Naive thymus-derived CD4-positive, alpha-beta T cell (primary cell): ENCODE measurements at regions of chr6 and their contacts with region 1.

Region 1: DNA sequence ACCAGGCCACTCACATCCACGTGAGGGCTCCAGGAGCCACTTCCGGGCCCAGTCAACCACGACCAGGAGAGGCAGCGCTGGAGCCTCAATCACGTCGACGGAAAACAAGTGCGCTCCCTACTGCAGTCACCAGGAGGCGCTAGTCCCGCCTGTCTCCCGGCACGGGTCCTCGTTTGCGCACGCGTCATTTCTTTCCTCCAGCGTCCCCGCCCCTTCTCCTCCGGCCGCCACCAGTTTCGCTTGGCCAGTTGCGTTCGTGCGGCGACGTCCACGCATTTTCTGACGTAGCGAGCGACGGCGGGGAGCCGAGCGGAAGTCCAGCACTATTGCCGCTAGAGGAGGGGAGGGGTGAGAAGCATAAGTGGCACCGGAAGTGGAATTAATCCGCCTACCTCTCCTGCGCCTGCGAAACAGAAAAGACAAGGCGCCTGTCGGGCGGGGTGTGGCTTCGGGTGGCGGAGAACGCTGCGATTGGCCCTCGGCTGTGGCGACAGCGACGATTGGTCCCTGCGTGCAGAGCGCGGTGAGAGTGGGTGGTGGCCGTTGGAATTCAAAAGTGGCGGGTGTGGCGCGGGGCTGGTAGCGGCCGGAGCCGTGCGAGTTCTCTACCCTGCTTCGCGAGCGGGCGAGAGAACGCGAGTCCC is at the start of gene KIFC1:
- DNase-seq: peak; percentile 94 to 99 (median 99)
- ATAC-seq: peak; percentile 92
- H3K4me3 ChIP-seq: peak within 1 kb of the TSS; percentile 58
- H3K4me3 Mint-ChIP-seq: peak within 1 kb of the TSS; percentile 82 to 93 (median 85)
- H3K27ac ChIP-seq: peak within 1 kb of the TSS; percentile 81
- H3K27ac Mint-ChIP-seq: peak within 1 kb of the TSS; percentile 94 to 98 (median 97)
- H3K4me1 ChIP-seq: peaks cover 13% of the 10 kb centered on the region in 2 donors
- H3K4me1 Mint-ChIP-seq: peaks cover 11 to 47% (median 22%) of the 10 kb centered on the region in 7 donors
- H3K27me3 ChIP-seq: no peaks in the 10 kb centered on the region
- H3K27me3 Mint-ChIP-seq: peaks cover 0 to 5% (median 0%) of the 10 kb centered on the region in 5 donors
- total RNA-seq, gene KIFC1: 0.65 to 87.9 (median 1.6) TPM

Region 2: GRCh38 chr6:33288921-33289748 is 102.3 kb before region 1 on chr6 and contains the starts of genes PFDN6 and WDR46:
- CTCF ChIA-PET with region 1: interaction called, 4 read pairs
- POLR2A ChIA-PET with region 1: no interaction called
- intact Hi-C with region 1: loop called in 1 of 2 experiments (anchors 1 kb)
- DNase-seq: peak; percentile 55 to 90 (median 87)
- ATAC-seq: peak; percentile 96
- H3K4me3 ChIP-seq: peak within 1 kb of the TSS; percentile 97
- H3K4me3 Mint-ChIP-seq: peak within 1 kb of the TSS; percentile 89 to 99 (median 98)
- H3K27ac ChIP-seq: peak within 1 kb of the TSS; percentile 80
- H3K27ac Mint-ChIP-seq: peak within 1 kb of the TSS; percentile 89 to 98 (median 92)
- H3K4me1 ChIP-seq: peaks cover 19 to 20% of the 10 kb centered on the region in 2 donors
- H3K4me1 Mint-ChIP-seq: peaks cover 32 to 51% (median 45%) of the 10 kb centered on the region in 7 donors
- H3K27me3 ChIP-seq: no peaks in the 10 kb centered on the region
- H3K27me3 Mint-ChIP-seq: no peaks in the 10 kb centered on the region
- total RNA-seq, gene PFDN6: 14.6 to 73.2 (median 35.5) TPM
- total RNA-seq, gene WDR46: 25.3 to 62.7 (median 52.7) TPM

Region 3: GRCh38 chr6:33344701-33345697 is 46.4 kb before region 1 on chr6:
- CTCF ChIA-PET with region 1: interaction called, 8 read pairs
- POLR2A ChIA-PET with region 1: interaction called, 7 read pairs
- intact Hi-C with region 1: loop called (anchors 1 kb)
- DNase-seq: peak; percentile 28 to 87 (median 82)
- ATAC-seq: peak; percentile 60
- H3K4me3 ChIP-seq: peak overlapping the region; percentile 64
- H3K4me3 Mint-ChIP-seq: peak overlapping the region; percentile 68 to 89 (median 86)
- H3K27ac ChIP-seq: peak overlapping the region; percentile 60
- H3K27ac Mint-ChIP-seq: peak overlapping the region; percentile 88 to 99 (median 96)
- H3K4me1 ChIP-seq: peaks cover 23 to 33% of the 10 kb centered on the region in 2 donors
- H3K4me1 Mint-ChIP-seq: peaks cover 22 to 54% (median 41%) of the 10 kb centered on the region in 7 donors
- H3K27me3 ChIP-seq: no peaks in the 10 kb centered on the region
- H3K27me3 Mint-ChIP-seq: peaks cover 0 to 7% (median 0%) of the 10 kb centered on the region in 5 donors

Region 4: GRCh38 chr6:33430991-33431879 is 39.8 kb after region 1 on chr6:
- CTCF ChIA-PET with region 1: interaction called, 7 read pairs
- POLR2A ChIA-PET with region 1: interaction called, 12 read pairs
- intact Hi-C with region 1: loop called (anchors 1 kb)
- DNase-seq: peak; percentile 65 to 89 (median 87)
- ATAC-seq: peak; percentile 82
- H3K4me3 ChIP-seq: peak overlapping the region; percentile 52
- H3K4me3 Mint-ChIP-seq: peak overlapping the region; percentile 86 to 98 (median 92)
- H3K27ac ChIP-seq: peak overlapping the region; percentile 88
- H3K27ac Mint-ChIP-seq: peak overlapping the region; percentile 81 to 98 (median 96)
- H3K4me1 ChIP-seq: peaks cover 42 to 51% of the 10 kb centered on the region in 2 donors
- H3K4me1 Mint-ChIP-seq: peaks cover 56 to 69% (median 64%) of the 10 kb centered on the region in 7 donors
- H3K27me3 ChIP-seq: no peaks in the 10 kb centered on the region
- H3K27me3 Mint-ChIP-seq: no peaks in the 10 kb centered on the region

Region 5: DNA sequence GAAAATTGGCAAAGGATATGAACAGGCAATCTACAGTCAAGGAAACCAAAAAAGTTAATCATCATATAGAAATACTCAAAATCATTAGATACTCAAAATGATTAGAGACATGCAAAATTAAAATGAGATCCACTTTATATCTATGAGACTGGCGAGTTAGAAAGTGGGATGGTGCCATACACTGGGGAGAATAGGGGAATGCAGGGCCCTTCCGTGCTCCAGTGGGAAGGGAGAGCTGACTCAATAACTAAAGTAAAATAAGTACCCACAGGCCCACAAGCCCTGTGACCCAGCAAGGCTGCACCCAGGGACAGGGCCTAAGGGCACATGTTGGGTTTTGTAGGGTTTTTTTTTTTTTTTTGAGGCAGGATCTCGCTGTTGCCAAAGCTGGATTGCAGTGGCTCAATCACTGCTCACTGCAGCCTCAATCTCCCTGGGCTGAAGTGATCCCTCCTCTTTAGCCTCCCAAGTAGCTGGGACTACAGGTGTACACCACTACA is 143.8 kb after region 1 on chr6:
- CTCF ChIA-PET with region 1: no interaction called
- POLR2A ChIA-PET with region 1: no interaction called
- intact Hi-C with region 1: loop called in 1 of 2 experiments (anchors 1 kb)
- DNase-seq: no peak
- ATAC-seq: no peak
- H3K4me3 ChIP-seq: no peak overlapping the region
- H3K4me3 Mint-ChIP-seq: no peak overlapping the region
- H3K27ac ChIP-seq: no peak overlapping the region
- H3K27ac Mint-ChIP-seq: peak overlapping the region in 3 of 9 donors; percentile 9 to 74 (median 50)
- H3K4me1 ChIP-seq: peaks cover 0 to 10% of the 10 kb centered on the region in 2 donors
- H3K4me1 Mint-ChIP-seq: peaks cover 9 to 32% (median 27%) of the 10 kb centered on the region in 7 donors
- H3K27me3 ChIP-seq: no peaks in the 10 kb centered on the region
- H3K27me3 Mint-ChIP-seq: peaks cover 0 to 2% (median 0%) of the 10 kb centered on the region in 5 donors

Region 6: DNA sequence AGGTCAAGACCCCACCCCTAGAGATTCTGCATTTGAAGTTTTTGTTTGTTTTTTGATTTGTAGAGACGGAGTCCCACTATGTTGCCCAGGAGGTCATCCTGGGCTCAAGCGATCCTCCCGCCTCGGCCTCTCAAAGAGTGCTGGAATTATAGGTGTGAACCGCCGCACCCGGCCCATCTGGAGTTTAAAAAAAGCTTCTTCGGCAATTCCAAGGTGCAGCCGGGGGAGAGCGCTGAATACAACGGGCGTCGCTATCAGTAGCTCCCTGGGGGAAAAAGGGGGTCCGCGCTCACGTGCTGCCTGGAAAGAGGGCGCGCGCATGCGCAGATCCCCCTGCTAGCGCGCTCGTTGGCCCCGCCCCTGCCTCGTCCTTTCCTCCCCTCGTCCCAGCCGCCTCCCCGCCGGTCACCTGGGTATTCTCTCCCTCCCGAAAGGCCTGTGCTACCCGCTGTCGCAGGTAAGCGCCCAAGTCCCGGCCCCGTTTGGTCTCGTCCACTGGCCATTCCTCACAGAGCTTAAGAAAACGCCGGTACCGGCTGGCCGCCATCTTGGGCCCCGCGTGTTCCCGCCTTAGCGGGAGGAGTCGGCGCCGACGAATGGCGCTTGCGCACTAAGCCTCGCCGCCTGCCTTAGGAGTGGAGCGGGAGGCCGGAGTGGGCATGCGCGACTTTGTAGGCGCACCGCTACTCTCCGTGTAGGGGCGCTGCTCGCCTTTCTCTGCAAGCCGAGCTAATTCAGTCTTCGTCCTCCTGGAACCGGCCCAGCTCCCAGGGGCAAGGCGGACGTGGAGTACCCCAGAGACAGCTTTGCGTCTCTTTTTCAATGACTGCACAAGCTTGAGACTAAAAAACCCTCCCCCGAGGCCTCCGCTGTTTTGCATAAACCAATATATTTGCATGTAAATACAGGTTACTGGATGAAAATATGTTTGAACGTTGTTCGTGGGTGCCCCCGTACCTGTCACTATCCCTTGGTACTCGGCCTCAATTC is 320.0 kb after region 1 on chr6 and contains the start of gene UQCC2:
- CTCF ChIA-PET with region 1: no interaction called
- POLR2A ChIA-PET with region 1: no interaction called
- intact Hi-C with region 1: loop called in 1 of 2 experiments (anchors 2 kb)
- DNase-seq: peak; percentile 94 to 97 (median 97)
- ATAC-seq: peak; percentile 97
- H3K4me3 ChIP-seq: peak within 1 kb of the TSS; percentile 83
- H3K4me3 Mint-ChIP-seq: peak within 1 kb of the TSS; percentile 94 to 99 (median 98)
- H3K27ac ChIP-seq: peak within 1 kb of the TSS; percentile 91
- H3K27ac Mint-ChIP-seq: peak within 1 kb of the TSS; percentile 94 to 98 (median 98)
- H3K4me1 ChIP-seq: peaks cover 9 to 11% of the 10 kb centered on the region in 2 donors
- H3K4me1 Mint-ChIP-seq: peaks cover 22 to 46% (median 36%) of the 10 kb centered on the region in 7 donors
- H3K27me3 ChIP-seq: no peaks in the 10 kb centered on the region
- H3K27me3 Mint-ChIP-seq: peaks cover 0 to 9% (median 0%) of the 10 kb centered on the region in 5 donors
- total RNA-seq, gene UQCC2: 15.7 to 79.8 (median 23.0) TPM